ENCODE measurements at regions of chr7 and their contacts with region 1.

Region 1: GRCh38 chr7:50339990-50340500 is 35.5 kb downstream of the IKZF1 start:
- DNase-seq: no peak
- H3K4me3 ChIP-seq: no peak overlapping the region
- H3K27ac ChIP-seq: no peak overlapping the region
- H3K4me1 ChIP-seq: no peaks in the 10 kb centered on the region
- H3K27me3 ChIP-seq: no peaks in the 10 kb centered on the region
- CTCF ChIP-seq: no peak
- POLR2A ChIP-seq: no peak

Region 2: GRCh38 chr7:50978633-50979215 is 638.7 kb after region 1 on chr7:
- intact Hi-C with region 1: loop called (anchors 5 kb)
- DNase-seq: no peak
- H3K4me3 ChIP-seq: no peak overlapping the region
- H3K27ac ChIP-seq: no peak overlapping the region
- H3K4me1 ChIP-seq: no peaks in the 10 kb centered on the region
- H3K27me3 ChIP-seq: no peaks in the 10 kb centered on the region
- CTCF ChIP-seq: no peak
- POLR2A ChIP-seq: no peak

Measured in breast epithelium (tissue), 4 donors.